Activated CD4-positive, alpha-beta T cell treated with anti-CD3 and anti-CD28 coated beads for 36 hours (primary cell): ENCODE measurements at regions of chrX and their contacts with region 1.

Region 1: DNA sequence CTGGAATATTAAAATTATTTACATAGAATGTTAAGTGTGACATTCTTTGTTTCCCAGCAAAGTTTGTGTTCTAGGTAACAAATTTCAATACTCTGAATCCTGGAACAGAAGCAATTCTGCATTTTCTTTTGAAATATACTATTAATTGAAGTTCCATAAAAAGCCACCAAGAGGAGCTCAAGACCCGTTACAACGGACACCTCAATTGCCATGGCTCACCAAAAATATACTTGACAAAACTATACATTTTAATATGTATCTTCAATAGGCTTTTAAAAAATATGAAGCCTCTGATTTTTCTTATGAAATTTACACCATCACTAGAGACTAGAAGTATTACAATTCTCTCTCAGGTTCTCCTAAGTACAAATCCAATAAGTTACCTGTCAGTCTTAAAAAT is 111.4 kb downstream of the NYX start:
- DNase-seq: peak; percentile 6
- ATAC-seq: no peak
- H3K4me3 Mint-ChIP-seq: no peak overlapping the region
- H3K27ac Mint-ChIP-seq: no peak overlapping the region
- H3K4me1 Mint-ChIP-seq: peaks cover 32% of the 10 kb centered on the region
- H3K27me3 Mint-ChIP-seq: no peaks in the 10 kb centered on the region

Region 2: DNA sequence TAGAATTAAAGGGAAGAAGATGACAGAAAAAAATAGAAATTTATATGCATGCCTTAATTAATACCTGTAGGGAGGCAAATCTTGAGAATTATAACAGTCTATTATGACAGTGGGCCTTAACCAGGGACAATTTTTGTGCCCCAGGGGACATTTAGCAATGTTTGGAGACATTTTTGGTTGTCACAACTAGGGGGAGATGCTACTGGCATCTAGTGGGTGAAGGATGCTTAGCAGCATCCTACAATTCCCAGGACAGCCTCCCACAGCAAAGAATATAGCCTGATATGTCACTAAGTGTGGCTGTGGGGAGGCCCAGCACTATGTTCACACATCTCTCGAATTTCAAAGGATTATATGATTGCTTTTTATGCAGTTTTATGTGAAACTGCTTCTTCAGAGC is 176.0 kb after region 1 on chrX:
- CTCF ChIA-PET with region 1: no interaction called
- POLR2A ChIA-PET with region 1: no interaction called
- intact Hi-C with region 1: loop called (anchors 1 kb)
- DNase-seq: peak; percentile 15
- ATAC-seq: peak; percentile 42
- H3K4me3 Mint-ChIP-seq: no peak overlapping the region
- H3K27ac Mint-ChIP-seq: peak overlapping the region; percentile 83
- H3K4me1 Mint-ChIP-seq: peaks cover 21% of the 10 kb centered on the region
- H3K27me3 Mint-ChIP-seq: no peaks in the 10 kb centered on the region

Region 3: GRCh38 chrX:41759817-41760216 is 201.3 kb after region 1 on chrX:
- CTCF ChIA-PET with region 1: interaction called, 11 read pairs
- POLR2A ChIA-PET with region 1: no interaction called
- intact Hi-C with region 1: loop called (anchors 1 to 2 kb)
- DNase-seq: no peak
- ATAC-seq: no peak
- H3K4me3 Mint-ChIP-seq: no peak overlapping the region
- H3K27ac Mint-ChIP-seq: no peak overlapping the region
- H3K4me1 Mint-ChIP-seq: peaks cover 3% of the 10 kb centered on the region
- H3K27me3 Mint-ChIP-seq: no peaks in the 10 kb centered on the region